ENCODE measurements at regions of chr3 and their contacts with region 1.

Region 1: DNA sequence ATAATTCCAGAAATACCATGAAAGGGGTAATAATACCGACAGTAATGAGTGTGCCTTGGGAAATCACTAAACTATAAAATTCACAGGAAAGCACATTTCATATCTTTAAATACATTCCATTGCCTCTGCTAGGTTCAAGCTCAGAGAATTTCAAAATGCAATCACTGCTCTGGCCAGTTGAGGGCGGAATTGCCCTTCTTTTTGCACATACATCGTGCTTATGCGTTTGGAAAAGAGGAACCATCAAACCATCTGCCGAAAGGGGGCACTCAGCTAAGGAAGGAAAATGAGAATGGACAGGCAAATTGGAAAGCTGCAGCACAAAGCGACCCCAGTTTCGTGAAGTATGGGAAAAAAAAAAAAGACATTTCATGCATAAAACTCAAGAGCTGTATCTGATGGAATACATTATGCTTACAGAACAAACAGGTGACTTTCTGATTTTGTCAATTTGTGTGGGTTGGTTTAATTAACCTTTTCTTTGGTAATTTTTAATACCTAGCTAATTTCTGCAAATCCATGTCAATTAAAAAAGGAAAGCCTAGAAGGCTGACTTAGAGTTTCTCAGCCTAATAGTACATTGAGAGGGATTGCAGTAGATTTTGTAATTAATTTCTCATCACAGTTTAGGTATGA is 61.4 kb downstream of the TUSC7 start:
- DNase-seq: peak; percentile 64
- ATAC-seq: peak; percentile 71
- H3K4me3 Mint-ChIP-seq: no peak overlapping the region
- H3K27ac Mint-ChIP-seq: no peak overlapping the region
- H3K4me1 Mint-ChIP-seq: no peaks in the 10 kb centered on the region
- H3K27me3 Mint-ChIP-seq: no peaks in the 10 kb centered on the region

Region 2: GRCh38 chr3:116707531-116707930 is 63.4 kb before region 1 on chr3:
- CTCF ChIA-PET with region 1: no interaction called
- POLR2A ChIA-PET with region 1: no interaction called
- DNase-seq: no peak
- ATAC-seq: no peak
- H3K4me3 Mint-ChIP-seq: no peak overlapping the region
- H3K27ac Mint-ChIP-seq: no peak overlapping the region
- H3K4me1 Mint-ChIP-seq: no peaks in the 10 kb centered on the region
- H3K27me3 Mint-ChIP-seq: no peaks in the 10 kb centered on the region

Region 3: DNA sequence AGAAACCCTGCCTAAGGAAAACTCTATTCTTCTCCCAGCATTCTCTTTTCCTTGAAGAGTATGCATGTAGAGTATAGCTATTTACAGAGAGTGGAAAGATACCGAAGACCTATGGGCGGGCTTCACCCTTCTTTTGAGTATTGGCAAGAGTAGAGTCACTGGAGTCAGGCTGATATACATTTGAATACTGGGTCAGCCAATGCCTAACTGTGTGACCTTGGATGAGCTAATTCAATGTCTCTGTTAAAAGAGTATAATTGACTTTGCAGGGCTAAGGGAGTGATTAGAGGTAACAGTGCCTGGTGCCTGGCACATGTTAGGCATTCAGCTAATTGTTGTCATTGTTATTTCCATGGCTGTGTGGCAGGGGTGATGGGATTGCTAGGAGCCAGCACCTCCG is 14.3 kb after region 1 on chr3:
- CTCF ChIA-PET with region 1: no interaction called
- POLR2A ChIA-PET with region 1: no interaction called
- DNase-seq: no peak
- ATAC-seq: no peak
- H3K4me3 Mint-ChIP-seq: no peak overlapping the region
- H3K27ac Mint-ChIP-seq: no peak overlapping the region
- H3K4me1 Mint-ChIP-seq: no peaks in the 10 kb centered on the region
- H3K27me3 Mint-ChIP-seq: no peaks in the 10 kb centered on the region

Region 4: DNA sequence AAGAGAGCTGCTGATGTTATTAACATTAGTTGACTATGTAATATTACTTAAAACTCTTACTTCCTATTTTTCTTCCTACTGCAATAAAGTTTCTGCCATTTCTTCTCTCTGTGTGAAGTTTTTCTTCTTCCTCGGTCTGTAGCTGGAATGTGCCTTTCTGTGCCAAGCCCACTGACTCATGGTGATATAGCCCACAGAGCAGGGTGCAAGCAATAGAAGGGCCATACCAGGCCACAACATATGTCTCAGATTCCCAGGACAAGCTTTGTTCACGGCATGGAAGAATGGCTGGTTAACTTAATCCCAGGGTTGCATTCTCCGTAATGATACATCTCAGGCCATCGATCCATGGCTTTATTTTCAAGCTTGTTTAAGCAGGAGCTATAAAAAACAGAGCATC is 754.0 kb after region 1 on chr3:
- CTCF ChIA-PET with region 1: interaction called, 10 read pairs
- POLR2A ChIA-PET with region 1: no interaction called
- DNase-seq: no peak
- ATAC-seq: no peak
- H3K4me3 Mint-ChIP-seq: no peak overlapping the region
- H3K27ac Mint-ChIP-seq: no peak overlapping the region
- H3K4me1 Mint-ChIP-seq: no peaks in the 10 kb centered on the region
- H3K27me3 Mint-ChIP-seq: no peaks in the 10 kb centered on the region

Measured in activated CD8-positive, alpha-beta T cell treated with anti-CD3 and anti-CD28 coated beads, Interleukin-2, amount 10 ng/mL, durations not matched to agents 7 days and 5 days (primary cell).